ENCODE measurements at regions of chr5 and their contacts with region 1.

Region 1: DNA sequence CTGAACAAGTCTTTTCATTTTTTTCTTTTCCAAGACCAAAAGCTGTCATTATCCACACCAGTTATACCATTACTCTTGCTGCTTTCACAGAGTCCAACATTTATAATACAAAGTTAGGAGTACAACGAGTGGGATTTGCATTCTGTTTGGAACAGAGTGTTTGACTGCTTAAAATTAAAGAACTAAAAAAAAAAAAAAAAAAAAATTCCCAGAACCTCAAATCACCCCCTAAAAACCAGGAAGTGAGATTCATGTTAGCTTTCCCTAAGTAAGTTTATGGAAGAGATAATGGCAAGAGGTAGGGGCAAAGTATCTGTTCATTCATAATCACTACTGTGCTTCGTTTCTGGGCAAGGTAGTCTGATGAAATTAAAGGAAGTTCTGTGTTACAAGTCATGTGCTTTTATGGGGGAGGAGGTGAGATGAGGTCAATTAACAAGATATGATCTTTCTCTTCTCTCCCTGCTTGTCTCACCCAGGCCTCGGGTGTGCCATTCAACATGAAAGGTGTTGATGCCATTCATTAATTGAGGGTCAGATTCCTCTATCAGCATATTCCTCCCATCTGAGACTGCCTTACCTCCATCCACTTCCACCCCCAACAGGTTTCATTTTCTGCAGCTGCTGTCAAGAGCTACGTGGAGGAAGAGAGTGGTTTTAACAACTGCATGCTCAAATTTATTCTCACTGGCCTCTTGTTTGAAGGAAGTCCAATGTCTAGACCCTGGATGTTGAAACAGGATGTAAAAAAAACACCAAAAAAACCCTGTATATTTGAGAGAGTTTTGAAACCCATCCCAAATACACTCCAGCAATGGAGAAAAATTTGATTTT is 58.1 kb downstream of the MARCHF3 start:
- DNase-seq: no peak

Region 2: GRCh38 chr5:125492977-125493376 is 1479.3 kb before region 1 on chr5:
- CTCF ChIA-PET with region 1: interaction called, 10 read pairs
- POLR2A ChIA-PET with region 1: no interaction called
- DNase-seq: no peak

Measured in HEK293T (cell line).